ENCODE measurements at regions of chr9 and their contacts with region 1.

Region 1: DNA sequence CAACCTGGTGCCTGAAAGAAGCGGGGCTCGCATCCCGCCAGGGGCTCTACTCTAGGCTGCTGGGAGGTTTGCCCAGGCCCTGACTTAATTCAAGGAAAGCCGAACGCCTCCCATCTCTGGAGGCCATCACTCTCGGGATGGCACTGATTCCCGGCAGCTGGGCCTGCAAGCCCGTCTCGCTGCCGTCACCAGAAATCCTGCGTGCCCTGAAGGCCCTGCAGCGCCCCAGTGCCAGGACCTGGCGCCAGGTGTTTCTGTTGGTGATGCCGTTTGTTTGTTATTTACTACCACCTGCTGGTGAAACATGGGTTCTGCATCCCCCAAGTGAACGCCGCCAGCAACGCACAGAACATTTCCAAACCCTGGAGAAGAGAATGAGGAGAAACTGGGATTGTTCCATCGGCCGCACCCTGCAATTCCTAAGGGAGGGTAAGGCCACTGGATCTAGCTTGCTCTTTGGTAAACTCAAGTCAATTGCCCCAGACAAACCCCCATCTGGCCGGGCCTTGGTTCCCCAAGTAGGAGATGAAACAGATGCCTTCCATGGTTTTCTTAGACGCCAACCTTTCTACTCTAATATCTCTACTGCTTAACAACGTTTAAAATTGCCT is 77.9 kb downstream of the AK8 start:
- DNase-seq: peak; percentile 57
- H3K4me3 ChIP-seq: no peak overlapping the region
- H3K27ac ChIP-seq: no peak overlapping the region
- H3K4me1 ChIP-seq: no peaks in the 10 kb centered on the region
- H3K27me3 ChIP-seq: no peaks in the 10 kb centered on the region
- CTCF ChIP-seq: peak; percentile 78 to 85

Region 2: DNA sequence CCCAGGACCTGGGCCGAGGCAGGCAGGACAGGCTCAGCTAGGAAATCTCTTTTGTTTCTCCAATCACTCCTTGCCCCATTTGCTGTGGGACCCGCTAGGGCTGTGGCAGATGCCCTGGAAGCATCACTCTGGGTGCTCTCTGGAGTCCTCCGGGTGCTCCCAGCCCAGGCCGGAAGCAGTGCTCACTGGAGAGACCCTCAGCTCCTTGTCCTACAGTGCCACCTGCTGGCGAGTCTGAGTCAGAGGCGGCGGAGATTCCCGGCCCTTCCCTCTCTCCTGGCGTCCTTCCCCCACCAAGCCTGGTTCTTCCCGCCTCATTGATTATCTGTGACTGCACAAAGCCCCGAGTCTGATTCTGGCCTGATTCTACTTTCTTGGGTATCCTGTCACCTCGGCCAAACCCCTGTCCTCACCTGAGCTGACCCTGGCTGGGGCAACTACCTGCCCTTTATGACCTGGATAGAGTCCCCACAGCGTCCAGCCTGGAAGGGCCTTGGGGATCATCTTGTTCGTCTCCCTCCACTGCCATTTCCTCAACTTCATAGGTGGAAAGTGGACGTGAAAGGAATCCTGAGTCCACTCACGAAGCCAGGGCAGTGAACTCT is 225.0 kb before region 1 on chr9:
- CTCF ChIA-PET with region 1: no interaction called
- dilution Hi-C with region 1: no loop called
- in situ Hi-C with region 1: no loop called
- intact Hi-C with region 1: loop called (anchors 2 kb)
- DNase-seq: peak; percentile 57
- H3K4me3 ChIP-seq: no peak overlapping the region
- H3K27ac ChIP-seq: no peak overlapping the region
- H3K4me1 ChIP-seq: no peaks in the 10 kb centered on the region
- H3K27me3 ChIP-seq: peaks cover 19% of the 10 kb centered on the region
- CTCF ChIP-seq: peak; percentile 65 to 83

Region 3: GRCh38 chr9:132651254-132651653 is 148.9 kb before region 1 on chr9:
- CTCF ChIA-PET with region 1: no interaction called
- dilution Hi-C with region 1: no loop called
- in situ Hi-C with region 1: no loop called
- intact Hi-C with region 1: loop called (anchors 1 kb)
- DNase-seq: peak; percentile 86
- H3K4me3 ChIP-seq: no peak overlapping the region
- H3K27ac ChIP-seq: peak overlapping the region; percentile 7
- H3K4me1 ChIP-seq: peaks cover 38% of the 10 kb centered on the region
- H3K27me3 ChIP-seq: no peaks in the 10 kb centered on the region
- CTCF ChIP-seq: peak; percentile 64 to 72

Region 4: GRCh38 chr9:132857616-132858342 is 57.6 kb after region 1 on chr9:
- CTCF ChIA-PET with region 1: no interaction called
- dilution Hi-C with region 1: no loop called
- in situ Hi-C with region 1: no loop called
- intact Hi-C with region 1: no loop called
- DNase-seq: no peak
- H3K4me3 ChIP-seq: no peak overlapping the region
- H3K27ac ChIP-seq: no peak overlapping the region
- H3K4me1 ChIP-seq: peaks cover 6% of the 10 kb centered on the region
- H3K27me3 ChIP-seq: no peaks in the 10 kb centered on the region
- CTCF ChIP-seq: no peak

Region 5: DNA sequence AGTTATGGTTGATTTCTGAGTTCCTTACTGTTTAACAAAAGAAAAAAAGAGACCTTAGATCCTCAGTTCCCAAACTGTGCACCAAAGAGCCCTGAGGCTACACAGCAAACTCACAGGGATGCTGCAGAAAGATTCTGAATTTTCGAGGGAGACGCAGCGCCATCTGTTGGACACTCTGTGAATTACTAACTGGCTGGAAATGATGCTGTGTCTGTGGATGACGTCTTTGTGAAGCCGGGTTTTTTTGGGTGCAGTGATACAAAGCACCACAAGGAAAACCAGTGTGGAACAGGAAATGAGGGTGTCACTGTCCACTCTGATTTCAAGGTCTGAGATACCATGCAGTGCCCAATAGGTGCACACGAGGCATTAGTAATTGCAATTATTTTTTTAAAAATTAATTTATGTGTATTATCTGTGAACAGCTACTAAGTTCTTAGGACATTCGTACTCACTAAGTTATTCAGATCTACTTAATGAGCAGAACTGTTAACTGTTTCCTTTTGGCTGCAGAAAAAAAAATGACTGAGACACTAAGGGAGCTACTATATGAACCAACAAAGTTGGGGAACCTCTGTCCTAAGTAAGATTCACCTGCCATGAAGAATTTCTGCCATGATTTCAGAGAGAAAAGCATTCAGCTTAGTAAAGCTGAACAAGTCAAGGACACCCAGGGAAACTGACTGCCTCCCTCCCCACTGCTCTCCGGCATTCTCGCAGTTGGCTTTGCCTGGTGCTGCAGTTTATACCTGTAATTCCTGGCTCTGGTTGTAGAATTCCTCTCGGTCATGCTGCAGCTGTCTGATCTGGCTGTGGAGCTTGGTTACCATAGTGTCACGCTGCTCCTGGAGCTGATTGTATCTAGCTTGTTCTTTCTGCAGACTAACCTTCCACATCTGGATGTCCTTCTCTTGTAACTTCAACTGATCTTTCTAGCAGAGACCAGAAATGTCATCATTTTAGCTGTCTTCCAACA is 102.0 kb after region 1 on chr9:
- CTCF ChIA-PET with region 1: no interaction called
- dilution Hi-C with region 1: no loop called
- in situ Hi-C with region 1: no loop called
- intact Hi-C with region 1: loop called (anchors 2 kb)
- DNase-seq: peak; percentile 75
- H3K4me3 ChIP-seq: no peak overlapping the region
- H3K27ac ChIP-seq: no peak overlapping the region
- H3K4me1 ChIP-seq: no peaks in the 10 kb centered on the region
- H3K27me3 ChIP-seq: no peaks in the 10 kb centered on the region
- CTCF ChIP-seq: peak; percentile 93 to 99

Measured in mammary epithelial cell (primary cell).